ENCODE measurements at regions of chr2 and their contacts with region 1.

Region 1: GRCh38 chr2:226583715-226584114 is 215.9 kb downstream of the IRS1 start:
- DNase-seq: peak in 1 of 2 experiments; percentile 83
- H3K4me3 ChIP-seq: no peak overlapping the region
- H3K27ac ChIP-seq: peak overlapping the region; percentile 31; the same call in 1 of the 2 replicates
- H3K4me1 ChIP-seq: peaks cover 19% of the 10 kb centered on the region
- H3K27me3 ChIP-seq: no peaks in the 10 kb centered on the region
- CTCF ChIP-seq: no peak

Region 2: GRCh38 chr2:226411727-226412360 is 171.9 kb before region 1 on chr2:
- CTCF ChIA-PET with region 1: no interaction called
- POLR2A ChIA-PET with region 1: no interaction called
- intact Hi-C with region 1: loop called (anchors 5 kb)
- DNase-seq: peak; percentile 57 to 95
- H3K4me3 ChIP-seq: no peak overlapping the region
- H3K27ac ChIP-seq: peak overlapping the region; percentile 78
- H3K4me1 ChIP-seq: peaks cover 14% of the 10 kb centered on the region
- H3K27me3 ChIP-seq: no peaks in the 10 kb centered on the region
- CTCF ChIP-seq: no peak

Region 3: DNA sequence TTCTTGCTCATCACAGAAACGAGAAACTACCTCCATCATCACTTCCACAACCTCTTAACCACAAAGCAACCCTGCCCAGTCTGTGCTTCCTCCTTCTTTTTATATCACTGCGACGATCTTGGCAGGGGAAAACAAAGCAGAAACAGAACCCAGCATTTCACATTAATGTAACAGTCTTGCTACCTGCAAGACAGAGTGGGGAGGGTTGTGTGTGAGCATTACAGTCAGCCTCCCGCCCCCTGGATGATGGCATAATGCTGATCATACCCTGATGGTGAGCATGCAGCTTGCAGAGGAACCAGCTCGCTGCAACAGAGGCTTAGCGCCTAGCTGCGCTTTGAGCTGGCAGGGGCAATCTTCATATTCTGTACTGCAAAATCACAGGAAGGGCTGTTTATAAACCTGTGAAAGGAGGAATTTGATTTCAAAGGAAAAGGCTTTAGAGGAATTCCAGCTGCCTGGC is 160.2 kb before region 1 on chr2:
- CTCF ChIA-PET with region 1: no interaction called
- POLR2A ChIA-PET with region 1: no interaction called
- intact Hi-C with region 1: loop called (anchors 5 kb)
- DNase-seq: peak in 1 of 2 experiments; percentile 41
- H3K4me3 ChIP-seq: no peak overlapping the region
- H3K27ac ChIP-seq: no peak overlapping the region
- H3K4me1 ChIP-seq: peaks cover 31% of the 10 kb centered on the region
- H3K27me3 ChIP-seq: no peaks in the 10 kb centered on the region
- CTCF ChIP-seq: no peak

Region 4: DNA sequence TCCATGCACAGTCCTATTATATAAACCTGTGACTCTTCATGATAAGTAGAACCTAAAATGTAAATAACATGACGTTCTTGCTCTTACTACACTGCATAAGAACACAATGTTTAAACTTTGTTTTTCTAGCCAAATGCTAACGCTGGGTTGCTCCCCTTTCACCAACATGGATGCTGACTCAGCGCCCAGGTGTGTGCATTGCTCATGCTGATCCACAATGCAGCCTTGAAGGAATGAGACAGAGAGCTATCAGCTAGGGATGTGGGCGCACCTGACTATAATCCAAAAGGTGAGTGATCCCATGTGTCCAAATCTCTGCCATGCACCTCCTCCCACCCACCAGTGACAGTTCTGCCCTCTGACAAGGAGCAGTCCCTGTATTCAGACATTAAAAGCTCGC is 19.0 kb before region 1 on chr2:
- CTCF ChIA-PET with region 1: no interaction called
- POLR2A ChIA-PET with region 1: interaction called, 11 read pairs
- intact Hi-C with region 1: no loop called
- DNase-seq: no peak
- H3K4me3 ChIP-seq: no peak overlapping the region
- H3K27ac ChIP-seq: no peak overlapping the region
- H3K4me1 ChIP-seq: no peaks in the 10 kb centered on the region
- H3K27me3 ChIP-seq: no peaks in the 10 kb centered on the region
- CTCF ChIP-seq: no peak

Region 5: GRCh38 chr2:226661789-226662545 is 78.3 kb after region 1 on chr2:
- CTCF ChIA-PET with region 1: no interaction called
- POLR2A ChIA-PET with region 1: interaction called, 5 read pairs
- intact Hi-C with region 1: loop called (anchors 2 kb)
- DNase-seq: peak; percentile 81 to 95
- H3K4me3 ChIP-seq: peak overlapping the region; percentile 14; the same call in 1 of the 2 replicates
- H3K27ac ChIP-seq: peak overlapping the region; percentile 92
- H3K4me1 ChIP-seq: peaks cover 27% of the 10 kb centered on the region
- H3K27me3 ChIP-seq: no peaks in the 10 kb centered on the region
- CTCF ChIP-seq: no peak

Region 6: DNA sequence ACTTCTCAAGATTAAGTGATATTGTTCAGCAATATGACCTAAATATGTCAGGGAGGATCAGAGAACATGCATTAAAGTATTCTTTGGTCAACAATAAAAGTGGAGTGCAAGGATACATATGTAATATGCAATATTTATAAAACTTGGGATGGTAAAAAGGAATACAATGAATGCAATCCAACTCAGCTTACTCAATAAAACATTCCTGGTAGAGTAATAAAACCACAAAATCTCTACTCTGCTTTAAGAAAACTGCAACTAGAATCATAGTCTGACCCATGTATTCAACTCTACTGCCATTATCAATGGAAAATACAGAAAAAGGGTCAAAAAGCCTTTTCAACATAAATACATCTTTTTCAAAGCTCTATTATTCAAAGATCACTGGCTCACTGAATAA is 204.3 kb after region 1 on chr2:
- CTCF ChIA-PET with region 1: no interaction called
- POLR2A ChIA-PET with region 1: no interaction called
- intact Hi-C with region 1: no loop called
- DNase-seq: no peak
- H3K4me3 ChIP-seq: no peak overlapping the region
- H3K27ac ChIP-seq: no peak overlapping the region
- H3K4me1 ChIP-seq: peaks cover 26% of the 10 kb centered on the region
- H3K27me3 ChIP-seq: no peaks in the 10 kb centered on the region
- CTCF ChIP-seq: no peak

Region 7: GRCh38 chr2:226885769-226886435 is 302.2 kb after region 1 on chr2:
- CTCF ChIA-PET with region 1: no interaction called
- POLR2A ChIA-PET with region 1: no interaction called
- intact Hi-C with region 1: no loop called
- DNase-seq: no peak
- H3K4me3 ChIP-seq: no peak overlapping the region
- H3K27ac ChIP-seq: no peak overlapping the region
- H3K4me1 ChIP-seq: 0 out of 2 replicates have a peak, but pooled peaks cover 6% of the 10 kb centered on the region
- H3K27me3 ChIP-seq: no peaks in the 10 kb centered on the region
- CTCF ChIP-seq: no peak